ENCODE measurements at regions of chr3 and their contacts with region 1.

Region 1: DNA sequence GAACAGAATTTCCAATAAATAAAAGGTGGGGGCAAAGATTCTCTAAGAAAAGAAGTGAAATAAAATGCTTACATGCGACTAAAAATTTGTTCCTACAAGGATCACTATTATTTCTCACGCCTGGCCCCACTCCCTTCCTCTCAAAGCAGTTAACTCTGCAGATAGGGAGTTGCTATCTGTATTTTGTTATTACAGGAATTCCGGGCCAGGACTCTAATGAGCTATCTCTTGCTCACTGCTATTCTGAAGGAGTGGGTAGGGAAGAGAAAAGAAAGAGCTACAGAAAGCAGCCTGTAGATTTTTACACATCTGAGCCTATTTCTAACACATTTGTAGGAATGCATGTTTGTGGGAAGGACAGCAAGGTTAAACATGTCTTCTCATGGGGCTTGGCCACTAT is 140.4 kb downstream of the PCCB start:
- DNase-seq: no peak
- H3K4me3 ChIP-seq: no peak overlapping the region
- H3K27ac ChIP-seq: no peak overlapping the region
- H3K4me1 ChIP-seq: no peaks in the 10 kb centered on the region
- H3K27me3 ChIP-seq: no peaks in the 10 kb centered on the region
- CTCF ChIP-seq: no peak

Region 2: GRCh38 chr3:136728918-136729317 is 338.3 kb after region 1 on chr3:
- intact Hi-C with region 1: no loop called
- DNase-seq: no peak
- H3K4me3 ChIP-seq: no peak overlapping the region
- H3K27ac ChIP-seq: no peak overlapping the region
- H3K4me1 ChIP-seq: peaks cover 7% of the 10 kb centered on the region
- H3K27me3 ChIP-seq: no peaks in the 10 kb centered on the region
- CTCF ChIP-seq: no peak

Region 3: DNA sequence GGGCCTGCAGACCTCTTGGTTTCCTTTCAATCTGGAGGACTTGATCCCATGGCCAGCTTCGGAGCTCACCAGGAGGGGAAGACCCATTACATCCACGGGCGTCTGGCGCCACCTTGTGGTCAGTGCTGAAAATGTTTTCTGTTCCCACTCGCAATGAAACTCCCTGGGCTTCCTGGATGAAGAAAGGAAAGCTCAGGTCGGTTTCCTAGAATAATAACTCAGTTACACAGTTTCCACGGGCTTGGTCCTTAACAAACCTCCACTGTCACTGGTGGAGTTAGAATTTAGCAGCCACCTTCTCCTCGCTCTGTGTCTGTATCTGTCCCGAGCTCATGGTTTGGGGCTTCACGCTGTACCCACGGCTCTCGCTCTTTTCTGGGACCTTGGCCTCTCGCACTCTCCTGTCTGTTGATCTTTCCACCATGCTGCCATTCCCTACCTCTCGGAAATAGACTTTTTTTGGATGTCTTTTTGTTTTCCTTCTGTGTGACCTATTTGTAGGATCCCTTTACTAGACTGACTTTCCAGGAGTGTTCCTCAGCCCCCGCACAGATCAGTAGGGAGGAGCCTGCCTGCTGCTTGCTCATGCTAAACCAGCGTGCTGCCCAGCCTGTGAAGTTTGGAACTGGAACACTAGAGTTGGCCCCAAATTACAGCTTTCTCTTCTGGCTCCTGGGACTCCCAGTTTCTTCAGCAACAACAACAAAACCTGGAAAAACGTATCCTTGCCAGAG is 623.5 kb after region 1 on chr3:
- intact Hi-C with region 1: loop called (anchors 5 kb)
- DNase-seq: peak; percentile 95
- H3K4me3 ChIP-seq: peak overlapping the region; percentile 42
- H3K27ac ChIP-seq: no peak overlapping the region
- H3K4me1 ChIP-seq: peaks cover 5% of the 10 kb centered on the region
- H3K27me3 ChIP-seq: no peaks in the 10 kb centered on the region
- CTCF ChIP-seq: peak; percentile 87

Measured in colonic mucosa (tissue), 4 donors.